B cell (primary cell): ENCODE measurements at regions of chr6 and their contacts with region 1.

Region 1: GRCh38 chr6:25330796-25331685 is 51.9 kb downstream of the CARMIL1 start:
- DNase-seq: no peak
- ATAC-seq: no peak
- H3K4me3 ChIP-seq: no peak overlapping the region
- H3K4me3 Mint-ChIP-seq: no peak overlapping the region
- H3K27ac ChIP-seq: no peak overlapping the region
- H3K27ac Mint-ChIP-seq: no peak overlapping the region
- H3K4me1 ChIP-seq: peaks cover 31 to 32% of the 10 kb centered on the region in 2 donors
- H3K4me1 Mint-ChIP-seq: peaks cover 47% of the 10 kb centered on the region
- H3K27me3 ChIP-seq: peaks cover 0 to 3% (median 0%) of the 10 kb centered on the region in 4 experiments
- H3K27me3 Mint-ChIP-seq: peaks cover under 1% of the 10 kb centered on the region
- CTCF ChIP-seq: no peak

Region 2: GRCh38 chr6:24752917-24753490 is 578.0 kb before region 1 on chr6:
- CTCF ChIA-PET with region 1: no interaction called
- POLR2A ChIA-PET with region 1: no interaction called
- intact Hi-C with region 1: no loop called
- DNase-seq: no peak
- ATAC-seq: no peak
- H3K4me3 ChIP-seq: no peak overlapping the region
- H3K4me3 Mint-ChIP-seq: no peak overlapping the region
- H3K27ac ChIP-seq: no peak overlapping the region
- H3K27ac Mint-ChIP-seq: no peak overlapping the region
- H3K4me1 ChIP-seq: peaks cover 3 to 9% of the 10 kb centered on the region in 2 donors
- H3K4me1 Mint-ChIP-seq: peaks cover 7% of the 10 kb centered on the region
- H3K27me3 ChIP-seq: no peaks in the 10 kb centered on the region
- H3K27me3 Mint-ChIP-seq: peaks cover 7% of the 10 kb centered on the region
- CTCF ChIP-seq: no peak

Region 3: GRCh38 chr6:25441663-25442270 is 110.7 kb after region 1 on chr6:
- CTCF ChIA-PET with region 1: no interaction called
- POLR2A ChIA-PET with region 1: interaction called, 17 read pairs
- intact Hi-C with region 1: no loop called
- DNase-seq: no peak
- ATAC-seq: no peak
- H3K4me3 ChIP-seq: no peak overlapping the region
- H3K4me3 Mint-ChIP-seq: no peak overlapping the region
- H3K27ac ChIP-seq: no peak overlapping the region
- H3K27ac Mint-ChIP-seq: no peak overlapping the region
- H3K4me1 ChIP-seq: peaks cover 4 to 8% of the 10 kb centered on the region in 2 donors
- H3K4me1 Mint-ChIP-seq: peaks cover 15% of the 10 kb centered on the region
- H3K27me3 ChIP-seq: no peaks in the 10 kb centered on the region
- H3K27me3 Mint-ChIP-seq: no peaks in the 10 kb centered on the region
- CTCF ChIP-seq: no peak

Region 4: GRCh38 chr6:25801436-25801835 is 470.4 kb after region 1 on chr6:
- CTCF ChIA-PET with region 1: no interaction called
- POLR2A ChIA-PET with region 1: no interaction called
- intact Hi-C with region 1: no loop called
- DNase-seq: no peak
- ATAC-seq: no peak
- H3K4me3 ChIP-seq: no peak overlapping the region
- H3K4me3 Mint-ChIP-seq: no peak overlapping the region
- H3K27ac ChIP-seq: no peak overlapping the region
- H3K27ac Mint-ChIP-seq: no peak overlapping the region
- H3K4me1 ChIP-seq: no peaks in the 10 kb centered on the region
- H3K4me1 Mint-ChIP-seq: no peaks in the 10 kb centered on the region
- H3K27me3 ChIP-seq: peaks cover 0 to 3% (median 3%) of the 10 kb centered on the region in 4 experiments
- H3K27me3 Mint-ChIP-seq: peaks cover 58% of the 10 kb centered on the region
- CTCF ChIP-seq: no peak